ENCODE measurements at regions of chr4 and their contacts with region 1.

Region 1: GRCh38 chr4:93918856-93919255 is 90.3 kb downstream of the ATOH1 start:
- DNase-seq: no peak

Region 2: GRCh38 chr4:93870876-93871458 is 47.9 kb before region 1 on chr4:
- intact Hi-C with region 1: loop called in 1 of 2 experiments (anchors 2 kb)
- DNase-seq: no peak

Measured in posterior vena cava (tissue), 2 donors.